ENCODE measurements at regions of chr15 and their contacts with region 1.

Region 1: DNA sequence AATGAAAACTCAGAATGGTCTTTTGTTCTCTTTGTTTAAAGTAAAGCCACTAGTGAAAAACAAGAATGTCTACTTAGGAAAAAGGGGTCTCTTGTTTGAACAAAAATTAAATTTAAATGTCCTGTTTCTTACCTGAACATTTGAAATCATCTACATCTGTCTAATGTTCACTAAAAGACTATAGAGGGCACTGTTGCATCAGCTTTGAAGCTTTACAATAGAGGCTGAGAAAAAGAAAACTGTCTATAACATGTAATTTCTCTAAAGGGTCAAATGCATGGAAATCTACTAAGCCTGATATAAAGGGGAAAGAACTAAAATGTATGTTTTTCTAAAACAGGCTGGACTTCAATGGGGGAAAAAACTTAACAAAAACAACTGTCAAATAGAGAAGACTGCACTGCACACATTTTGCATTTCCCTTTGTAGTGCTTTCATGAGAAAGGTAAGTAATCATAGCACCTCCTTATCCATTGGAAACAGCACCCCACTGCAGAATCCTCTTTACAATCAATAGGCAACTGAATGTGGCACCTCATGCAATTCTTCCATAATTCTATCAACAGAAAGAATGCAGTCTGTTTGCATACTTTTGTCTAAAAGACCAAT is 26.3 kb downstream of the DPH6 start:
- DNase-seq: no peak
- ATAC-seq: peak in 2 of 4 donors; percentile 57 to 80
- H3K4me3 ChIP-seq: no peak overlapping the region
- H3K27ac ChIP-seq: no peak overlapping the region
- H3K4me1 ChIP-seq: peaks cover 11% of the 10 kb centered on the region
- H3K27me3 ChIP-seq: no peaks in the 10 kb centered on the region
- CTCF ChIP-seq: peak; percentile 70

Region 2: DNA sequence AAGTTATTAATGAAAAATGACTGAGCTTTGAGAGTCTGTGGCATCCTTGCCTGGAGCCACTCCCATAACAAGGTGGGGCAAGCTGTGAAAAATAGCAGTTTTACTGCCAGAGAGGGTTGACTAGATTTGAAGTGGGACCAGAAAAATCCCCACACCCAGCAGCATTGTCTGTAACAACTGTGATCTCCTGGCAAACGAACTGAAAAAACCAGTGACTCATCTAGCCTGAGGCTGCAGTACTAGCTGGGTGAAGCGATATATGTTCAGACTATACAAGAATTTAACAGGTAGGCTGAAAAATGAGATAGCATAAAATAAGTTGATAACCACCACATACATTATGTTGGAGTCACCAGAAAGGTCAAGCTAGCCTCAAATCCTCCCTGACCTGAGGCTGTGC is 37.7 kb before region 1 on chr15:
- intact Hi-C with region 1: no loop called
- DNase-seq: no peak
- ATAC-seq: peak in 2 of 4 donors; percentile 39 to 44
- H3K4me3 ChIP-seq: no peak overlapping the region
- H3K27ac ChIP-seq: no peak overlapping the region
- H3K4me1 ChIP-seq: peaks cover 13% of the 10 kb centered on the region
- H3K27me3 ChIP-seq: no peaks in the 10 kb centered on the region
- CTCF ChIP-seq: no peak

Region 3: DNA sequence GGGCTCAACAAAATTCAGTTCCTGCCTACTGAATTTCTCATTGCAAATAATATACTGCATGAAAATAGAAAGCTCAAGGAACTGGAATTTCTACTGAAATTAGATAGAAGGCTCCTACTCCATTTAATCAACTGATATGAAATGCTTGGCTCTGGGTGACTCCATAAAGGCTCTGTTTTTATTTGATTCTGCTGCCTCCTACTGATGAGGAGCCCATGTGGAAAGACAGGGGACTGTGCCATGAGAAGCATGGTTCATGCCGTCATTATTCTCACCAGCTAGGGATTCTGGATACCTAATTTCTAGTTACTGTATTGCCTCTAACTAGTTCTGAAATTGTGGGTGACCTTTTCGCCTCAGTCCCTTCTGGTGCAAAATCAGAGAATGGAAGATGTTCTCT is 392.6 kb after region 1 on chr15:
- intact Hi-C with region 1: loop called in 1 of 2 experiments (anchors 5 kb)
- DNase-seq: no peak
- ATAC-seq: peak in 1 of 4 donors; percentile 44
- H3K4me3 ChIP-seq: no peak overlapping the region
- H3K27ac ChIP-seq: no peak overlapping the region
- H3K4me1 ChIP-seq: no peaks in the 10 kb centered on the region
- H3K27me3 ChIP-seq: peaks cover 0 to 4% (median 0%) of the 10 kb centered on the region in 3 donors
- CTCF ChIP-seq: peak; percentile 7

Region 4: DNA sequence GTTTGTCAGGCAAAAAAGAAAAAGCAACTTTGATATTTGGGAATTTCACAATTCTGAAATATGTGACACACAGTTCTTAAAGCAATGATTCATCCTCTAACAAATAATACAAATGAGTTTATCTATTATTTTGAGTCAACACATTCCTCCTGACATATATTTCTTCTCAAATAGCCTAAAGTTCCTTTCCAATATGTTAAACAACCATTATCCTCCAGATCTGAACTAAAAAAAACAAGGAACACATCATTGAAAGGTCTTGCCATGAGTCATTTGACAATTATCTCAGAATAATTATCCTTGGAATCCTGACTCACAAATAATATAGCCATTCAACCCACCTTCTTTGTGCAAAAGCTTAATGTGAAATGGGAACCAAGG is 851.1 kb after region 1 on chr15:
- intact Hi-C with region 1: loop called in 1 of 2 experiments (anchors 5 kb)
- DNase-seq: no peak
- ATAC-seq: no peak
- H3K4me3 ChIP-seq: no peak overlapping the region
- H3K27ac ChIP-seq: no peak overlapping the region
- H3K4me1 ChIP-seq: no peaks in the 10 kb centered on the region
- H3K27me3 ChIP-seq: no peaks in the 10 kb centered on the region
- CTCF ChIP-seq: no peak

Region 5: DNA sequence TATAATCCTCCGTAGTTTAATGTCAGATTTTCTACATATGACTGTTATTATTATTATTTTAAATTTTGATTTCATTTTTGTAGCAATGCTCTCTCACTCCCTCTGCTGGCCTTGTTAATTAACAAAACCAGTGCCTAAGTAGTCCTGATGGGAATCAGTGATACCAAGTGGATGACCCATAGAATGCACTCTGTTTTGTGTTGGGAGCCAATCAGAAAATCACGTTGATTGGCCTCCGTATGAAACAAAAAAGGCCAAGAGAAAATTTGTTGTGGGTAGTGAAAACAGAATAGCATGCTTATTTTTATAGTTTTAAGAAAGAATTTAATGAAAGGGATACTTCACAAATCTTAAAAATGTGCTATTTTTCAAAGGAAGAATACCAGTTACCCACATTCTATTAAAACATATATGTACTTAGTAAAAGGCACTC is 1615.1 kb after region 1 on chr15:
- intact Hi-C with region 1: loop called in 1 of 2 experiments (anchors 10 kb)
- DNase-seq: no peak
- ATAC-seq: peak in 3 of 4 donors; percentile 50 to 82 (median 74)
- H3K4me3 ChIP-seq: no peak overlapping the region
- H3K27ac ChIP-seq: no peak overlapping the region
- H3K4me1 ChIP-seq: no peaks in the 10 kb centered on the region
- H3K27me3 ChIP-seq: no peaks in the 10 kb centered on the region
- CTCF ChIP-seq: peak; percentile 75

Measured in psoas muscle (tissue), 8 donors.